Left lung (tissue), 14 donors: ENCODE measurements at regions of chr3 and their contacts with region 1.

Region 1: DNA sequence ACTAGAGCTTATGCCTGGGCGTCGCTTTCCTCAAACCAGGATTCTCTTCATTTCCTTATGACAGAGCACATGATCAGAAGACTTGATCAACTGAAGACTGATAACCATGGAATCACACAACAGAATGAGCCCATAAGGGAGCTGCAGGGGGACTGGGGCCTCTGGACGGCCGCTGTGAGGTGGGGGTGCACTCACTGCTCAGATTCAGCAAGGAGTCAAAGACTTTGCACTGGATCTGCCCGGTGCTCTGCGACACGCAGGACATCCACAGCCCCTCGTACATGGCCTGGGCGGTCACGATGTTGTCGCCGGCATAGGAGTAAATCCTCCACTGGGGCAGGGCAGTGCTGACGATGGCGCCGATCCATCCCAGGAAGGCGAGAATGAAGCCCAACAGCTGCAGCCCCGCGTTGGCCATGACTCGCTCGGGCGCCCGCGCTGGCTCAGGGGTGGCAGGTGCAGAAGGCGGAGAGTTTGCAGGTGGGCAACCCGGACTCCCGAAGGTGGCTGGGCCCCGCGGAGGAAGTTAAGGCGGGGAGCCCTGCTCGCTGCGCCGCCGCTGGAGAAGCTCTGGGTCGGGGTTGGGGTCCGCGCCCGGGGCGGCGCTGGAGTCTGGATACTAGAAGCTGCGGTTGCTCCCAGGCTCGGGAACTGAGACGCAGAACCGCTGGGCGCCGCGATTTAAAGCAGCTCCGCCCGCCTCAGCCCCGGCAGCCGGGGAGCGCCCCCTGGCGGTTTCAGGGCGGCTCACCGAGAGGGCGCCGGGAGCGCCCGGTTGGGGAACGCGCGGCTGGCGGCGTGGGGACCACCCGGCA is at the start of gene CLDN1:
- DNase-seq: peak; percentile 64 to 95 (median 81)
- ATAC-seq: peak; percentile 88
- H3K4me3 ChIP-seq: peak within 1 kb of the TSS; percentile 40 to 53
- H3K27ac ChIP-seq: peak within 1 kb of the TSS; percentile 72 to 78
- H3K4me1 ChIP-seq: peaks cover 11 to 13% of the 10 kb centered on the region in 2 donors
- H3K27me3 ChIP-seq: peaks cover 0 to 25% of the 10 kb centered on the region in 2 donors
- CTCF ChIP-seq: peak; percentile 94 to 95
- polyA plus RNA-seq, gene CLDN1: 1.3 to 4.2 (median 2.2) TPM

Region 2: GRCh38 chr3:189961525-189962161 is 360.4 kb before region 1 on chr3:
- intact Hi-C with region 1: loop called in 1 of 2 experiments (anchors 10 kb)
- DNase-seq: peak in 3 of 4 donors; percentile 58 to 71 (median 60)
- ATAC-seq: peak; percentile 93
- H3K4me3 ChIP-seq: no peak overlapping the region
- H3K27ac ChIP-seq: no peak overlapping the region
- H3K4me1 ChIP-seq: peaks cover 0 to 4% of the 10 kb centered on the region in 2 donors
- H3K27me3 ChIP-seq: peaks cover 0 to 7% of the 10 kb centered on the region in 2 donors
- CTCF ChIP-seq: peak; percentile 79 to 89

Region 3: DNA sequence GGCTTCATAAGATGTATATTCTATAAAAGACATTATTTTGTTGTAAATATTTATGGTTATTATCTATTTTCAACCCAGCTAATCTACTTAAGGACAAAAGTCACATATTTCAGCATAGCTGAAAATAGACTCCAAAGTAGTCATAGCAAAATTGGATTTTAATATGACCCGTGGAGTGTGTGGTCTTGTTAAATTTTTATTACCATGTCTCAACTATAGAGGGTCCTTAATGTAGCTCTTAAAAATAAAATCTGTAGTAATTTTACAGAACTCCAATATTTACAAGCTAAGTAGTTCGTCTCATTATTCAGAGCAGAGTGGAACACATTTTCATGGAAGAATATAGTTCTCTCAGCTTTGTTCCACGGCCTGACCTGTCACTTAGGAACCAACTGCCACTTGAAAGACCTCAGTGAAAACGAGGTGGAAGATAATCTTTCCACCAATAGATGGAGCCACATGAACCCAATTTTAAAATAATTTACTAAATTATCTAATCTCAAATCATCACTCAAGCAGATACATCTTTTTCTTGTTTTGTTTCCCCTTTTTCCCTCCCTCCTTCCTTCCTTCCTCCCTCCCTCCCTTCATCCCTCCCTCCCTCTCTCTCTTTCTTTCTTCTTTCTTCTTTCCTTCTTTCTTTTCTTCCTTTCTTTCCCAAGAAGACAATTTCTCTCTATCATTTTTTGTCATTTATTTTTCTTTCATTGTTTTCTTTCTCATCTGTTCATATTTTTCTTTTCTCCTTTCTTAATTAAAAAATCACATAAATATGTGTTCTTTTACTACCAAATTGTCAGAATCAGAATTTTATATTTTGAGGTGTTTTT is 96.9 kb before region 1 on chr3:
- intact Hi-C with region 1: loop called in 1 of 2 experiments (anchors 10 kb)
- DNase-seq: peak in 1 of 4 donors; percentile 29
- ATAC-seq: peak; percentile 73
- H3K4me3 ChIP-seq: no peak overlapping the region
- H3K27ac ChIP-seq: no peak overlapping the region
- H3K4me1 ChIP-seq: peaks cover 0 to 3% of the 10 kb centered on the region in 2 donors
- H3K27me3 ChIP-seq: no peaks in the 10 kb centered on the region
- CTCF ChIP-seq: peak; percentile 23 to 32